ENCODE measurements at regions of chr18 and their contacts with region 1.

Region 1: GRCh38 chr18:36284671-36285295 is 12.7 kb upstream of the FHOD3 start:
- DNase-seq: peak; percentile 40
- ATAC-seq: peak; percentile 83
- H3K4me3 ChIP-seq: no peak overlapping the region
- H3K27ac ChIP-seq: no peak overlapping the region
- H3K4me1 ChIP-seq: no peaks in the 10 kb centered on the region
- H3K27me3 ChIP-seq: peaks cover 0 to 2% of the 10 kb centered on the region in 2 experiments; a peak in 2 of 4 replicates
- CTCF ChIP-seq: peak; percentile 76 to 92 (median 83)
- EP300 ChIP-seq: no peak
- POLR2A ChIP-seq: no peak
- RAD21 ChIP-seq: peak; percentile 99

Region 2: DNA sequence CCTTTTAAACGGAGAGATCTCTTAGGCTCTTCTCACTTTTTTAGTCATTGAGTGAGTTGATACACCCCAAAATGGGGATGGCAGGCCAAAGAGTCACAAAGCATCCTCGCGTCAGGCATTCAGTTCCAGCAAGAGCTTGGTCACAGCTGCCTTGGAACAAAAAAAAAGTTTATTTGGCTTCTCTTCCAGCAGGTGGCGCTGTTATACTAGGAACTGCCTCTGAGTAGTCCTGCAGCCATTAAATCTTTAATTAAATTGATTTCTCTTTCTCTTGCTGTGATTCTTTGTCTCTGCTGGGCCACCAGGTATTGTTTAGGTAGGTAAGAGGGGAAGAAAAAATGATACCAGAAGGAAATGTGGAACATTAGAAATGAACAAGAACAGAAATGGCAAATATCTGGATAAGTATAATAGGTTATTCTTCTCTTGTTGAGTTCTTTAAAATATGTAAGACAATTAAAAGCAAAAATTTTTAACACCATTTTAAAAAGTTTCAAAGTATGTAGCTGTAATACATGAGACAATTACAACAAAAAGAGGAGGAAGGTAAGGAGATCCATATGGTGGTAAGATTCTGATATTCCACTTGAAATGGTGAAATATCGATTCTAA is 528.2 kb before region 1 on chr18:
- CTCF ChIA-PET with region 1: interaction called, 17 read pairs
- POLR2A ChIA-PET with region 1: no interaction called
- RAD21 ChIA-PET with region 1: interaction called, 13 read pairs
- SMC1A ChIA-PET with region 1: interaction called, 30 read pairs
- in situ Hi-C with region 1: loop called (anchors 5 kb)
- intact Hi-C with region 1: loop called (anchors 5 kb)
- DNase-seq: no peak
- ATAC-seq: peak; percentile 93
- H3K4me3 ChIP-seq: no peak overlapping the region
- H3K27ac ChIP-seq: no peak overlapping the region
- H3K4me1 ChIP-seq: no peaks in the 10 kb centered on the region
- H3K27me3 ChIP-seq: peaks cover 0 to 2% of the 10 kb centered on the region in 2 experiments; a peak in 2 of 4 replicates
- CTCF ChIP-seq: peak; percentile 51 to 84 (median 53); a peak in 5 of 6 replicates
- EP300 ChIP-seq: no peak
- POLR2A ChIP-seq: no peak
- RAD21 ChIP-seq: peak; percentile 92

Region 3: DNA sequence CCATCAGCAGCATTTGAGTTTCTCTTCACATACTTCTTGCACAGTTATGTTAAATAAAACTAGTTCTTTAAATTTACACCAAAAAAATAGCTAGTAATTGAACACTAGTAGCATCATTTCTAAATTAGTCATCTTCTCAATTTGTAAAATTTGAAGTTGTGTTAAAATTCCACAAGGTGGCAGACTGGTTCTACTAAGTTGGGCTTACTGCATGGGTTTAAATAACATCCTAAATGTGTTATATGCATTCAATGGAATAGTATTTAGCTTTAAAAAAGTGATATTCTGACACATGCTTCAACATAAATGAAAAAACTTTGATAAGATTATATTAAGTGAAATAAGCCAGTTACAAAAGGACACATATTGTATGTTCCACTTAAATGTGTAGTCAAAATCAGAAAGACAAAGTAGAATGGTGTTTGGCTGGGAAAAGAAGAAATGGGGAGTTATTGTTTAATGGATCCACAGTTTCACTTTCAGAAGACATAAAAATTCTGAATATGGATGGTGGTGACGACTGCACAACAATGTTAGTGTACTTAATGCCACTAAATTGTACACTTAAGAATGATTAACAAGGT is 188.8 kb before region 1 on chr18:
- CTCF ChIA-PET with region 1: interaction called, 178 read pairs
- POLR2A ChIA-PET with region 1: no interaction called
- RAD21 ChIA-PET with region 1: interaction called, 99 read pairs
- SMC1A ChIA-PET with region 1: interaction called, 167 read pairs
- in situ Hi-C with region 1: loop called (anchors 5 kb)
- intact Hi-C with region 1: loop called (anchors 1 kb)
- DNase-seq: no peak
- ATAC-seq: peak; percentile 76
- H3K4me3 ChIP-seq: no peak overlapping the region
- H3K27ac ChIP-seq: no peak overlapping the region
- H3K4me1 ChIP-seq: no peaks in the 10 kb centered on the region
- H3K27me3 ChIP-seq: no peaks in the 10 kb centered on the region
- CTCF ChIP-seq: peak; percentile 33 to 67 (median 36); a peak in 4 of 6 replicates
- EP300 ChIP-seq: no peak
- POLR2A ChIP-seq: no peak
- RAD21 ChIP-seq: peak; percentile 83

Region 4: DNA sequence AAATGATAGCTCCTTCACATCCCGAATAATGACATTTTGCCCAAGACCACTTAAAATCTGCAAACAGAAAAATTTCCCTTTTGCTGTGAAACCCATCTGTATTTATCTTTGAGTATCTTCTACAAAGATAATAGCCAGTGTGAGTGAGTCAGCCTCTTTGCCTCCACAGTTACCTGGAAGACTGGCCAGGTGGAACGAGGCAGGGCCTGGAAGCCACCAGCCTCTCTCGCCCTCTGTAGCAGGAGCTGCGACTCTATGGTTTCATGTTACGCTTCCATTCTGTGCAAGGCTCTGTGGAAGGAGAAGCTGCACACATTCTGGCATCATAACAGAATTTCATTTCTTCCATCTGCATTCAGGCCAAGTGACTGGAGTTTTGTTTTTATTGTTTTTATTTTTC is 145.5 kb before region 1 on chr18:
- CTCF ChIA-PET with region 1: interaction called, 3 read pairs
- POLR2A ChIA-PET with region 1: no interaction called
- RAD21 ChIA-PET with region 1: no interaction called
- SMC1A ChIA-PET with region 1: interaction called, 10 read pairs
- in situ Hi-C with region 1: no loop called
- intact Hi-C with region 1: no loop called
- DNase-seq: no peak
- ATAC-seq: no peak
- H3K4me3 ChIP-seq: no peak overlapping the region
- H3K27ac ChIP-seq: no peak overlapping the region
- H3K4me1 ChIP-seq: no peaks in the 10 kb centered on the region
- H3K27me3 ChIP-seq: no peaks in the 10 kb centered on the region
- CTCF ChIP-seq: no peak
- EP300 ChIP-seq: no peak
- POLR2A ChIP-seq: no peak
- RAD21 ChIP-seq: no peak

Region 5: DNA sequence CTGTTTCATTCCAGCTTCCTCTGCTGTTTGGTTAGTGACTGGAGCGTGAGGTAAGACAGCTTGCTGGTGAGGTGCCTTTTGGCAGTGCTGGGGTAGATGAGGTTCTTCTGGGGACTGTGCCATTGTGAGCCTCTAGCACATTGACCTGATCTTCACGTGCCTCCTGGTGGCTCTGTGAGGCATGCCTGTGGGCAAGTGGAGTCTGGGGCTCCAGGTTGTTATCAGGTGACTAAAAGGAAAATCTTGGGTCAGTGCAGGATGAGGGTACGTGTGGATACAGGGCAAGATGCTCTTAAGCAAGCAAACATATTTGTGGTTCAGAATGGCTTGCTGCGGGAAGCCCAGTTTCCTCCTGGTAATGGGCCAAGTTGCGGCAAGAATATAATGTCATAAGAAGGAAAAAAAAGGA is 88.1 kb after region 1 on chr18:
- CTCF ChIA-PET with region 1: interaction called, 3 read pairs
- POLR2A ChIA-PET with region 1: no interaction called
- RAD21 ChIA-PET with region 1: interaction called, 3 read pairs
- SMC1A ChIA-PET with region 1: interaction called, 12 read pairs
- in situ Hi-C with region 1: no loop called
- intact Hi-C with region 1: no loop called
- DNase-seq: no peak
- ATAC-seq: peak; percentile 57
- H3K4me3 ChIP-seq: no peak overlapping the region
- H3K27ac ChIP-seq: no peak overlapping the region
- H3K4me1 ChIP-seq: no peaks in the 10 kb centered on the region; the same call in 1 of the 2 replicates
- H3K27me3 ChIP-seq: no peaks in the 10 kb centered on the region
- CTCF ChIP-seq: peak; percentile 16 to 33 (median 32); a peak in 3 of 6 replicates
- EP300 ChIP-seq: no peak
- POLR2A ChIP-seq: no peak
- RAD21 ChIP-seq: peak; percentile 53; the same call in 1 of the 2 replicates